ENCODE measurements at regions of chr1 and their contacts with region 1.

Region 1: GRCh38 chr1:58699011-58699762 is 675 bp downstream of the MYSM1 start:
- DNase-seq: no peak
- H3K4me3 ChIP-seq: peak overlapping the region; percentile 94
- CTCF ChIP-seq: no peak

Region 2: DNA sequence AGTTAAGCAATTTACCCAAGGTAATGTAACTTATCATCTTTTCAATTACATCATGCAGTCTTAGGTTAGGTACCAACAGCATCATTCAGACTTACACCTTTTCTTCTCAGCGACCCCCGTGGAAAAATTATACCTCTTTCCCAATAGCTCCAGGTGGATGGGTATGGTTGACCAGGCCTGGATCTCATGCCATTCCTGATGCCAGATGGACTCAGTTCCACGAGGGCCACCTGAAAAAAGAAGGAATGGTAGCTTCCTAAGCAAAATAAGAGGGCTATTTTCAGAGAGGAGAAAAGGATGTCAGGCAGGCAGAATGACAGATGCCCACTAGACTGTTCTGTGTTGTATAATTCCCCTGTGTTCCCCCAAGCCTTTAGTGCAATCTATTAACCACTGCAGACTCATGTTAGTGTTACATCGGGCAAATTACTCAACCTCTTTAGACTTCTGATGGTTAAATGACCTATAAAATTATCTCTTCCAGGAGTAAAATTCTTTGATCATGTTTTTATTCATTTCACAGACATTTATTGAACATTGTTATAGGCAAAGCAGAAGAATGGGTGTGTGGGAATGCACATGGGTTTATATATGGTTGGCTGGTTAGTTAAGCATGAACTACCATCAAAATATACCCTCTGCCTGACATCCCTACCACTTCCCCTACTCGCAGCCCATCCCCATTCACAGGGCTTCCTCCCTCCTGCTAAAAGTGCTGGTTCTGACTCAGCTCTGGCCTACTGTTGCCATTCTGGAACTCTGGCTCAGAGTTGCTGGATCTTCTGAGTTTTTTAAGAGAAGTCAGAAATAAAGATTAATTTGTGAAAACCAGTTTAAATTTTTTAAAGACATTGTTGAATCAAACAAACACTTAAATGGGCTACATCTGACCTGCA is 11.3 kb after region 1 on chr1:
- CTCF ChIA-PET with region 1: interaction called, 14 read pairs
- POLR2A ChIA-PET with region 1: no interaction called
- DNase-seq: no peak
- H3K4me3 ChIP-seq: no peak overlapping the region
- CTCF ChIP-seq: no peak